ENCODE measurements at regions of chr16 and their contacts with region 1.

Region 1: GRCh38 chr16:68328151-68328859 is 17.5 kb downstream of the PRMT7 start:
- DNase-seq: peak; percentile 83
- H3K4me3 ChIP-seq: no peak overlapping the region
- H3K27ac ChIP-seq: no peak overlapping the region
- H3K4me1 ChIP-seq: peaks cover 34% of the 10 kb centered on the region
- H3K27me3 ChIP-seq: no peaks in the 10 kb centered on the region
- CTCF ChIP-seq: peak; percentile 87 to 97
- POLR2A ChIP-seq: no peak

Region 2: DNA sequence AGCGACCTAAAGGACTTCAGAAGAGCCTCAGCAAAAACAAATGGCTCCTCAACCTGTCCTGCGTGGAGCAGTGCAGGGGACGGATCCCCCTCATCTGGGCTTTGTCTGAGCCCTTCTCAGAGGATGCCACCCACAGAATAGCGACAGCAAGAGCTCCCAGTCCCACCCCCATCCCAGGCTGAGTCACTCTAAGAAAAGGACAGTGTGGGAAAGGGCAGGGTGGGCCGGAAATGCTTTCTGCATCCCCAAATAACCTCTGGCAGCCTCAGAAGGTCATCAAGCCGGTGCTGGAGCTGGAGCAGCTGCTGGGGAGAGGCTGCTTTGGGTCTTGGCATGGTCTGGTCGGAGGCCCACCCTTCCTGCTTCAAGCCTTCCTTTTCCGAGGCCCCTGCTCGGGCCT is 368.8 kb before region 1 on chr16:
- CTCF ChIA-PET with region 1: no interaction called
- POLR2A ChIA-PET with region 1: no interaction called
- dilution Hi-C with region 1: no loop called
- intact Hi-C with region 1: no loop called
- DNase-seq: no peak
- H3K4me3 ChIP-seq: no peak overlapping the region
- H3K27ac ChIP-seq: no peak overlapping the region
- H3K4me1 ChIP-seq: no peaks in the 10 kb centered on the region
- H3K27me3 ChIP-seq: no peaks in the 10 kb centered on the region
- CTCF ChIP-seq: no peak
- POLR2A ChIP-seq: no peak

Region 3: DNA sequence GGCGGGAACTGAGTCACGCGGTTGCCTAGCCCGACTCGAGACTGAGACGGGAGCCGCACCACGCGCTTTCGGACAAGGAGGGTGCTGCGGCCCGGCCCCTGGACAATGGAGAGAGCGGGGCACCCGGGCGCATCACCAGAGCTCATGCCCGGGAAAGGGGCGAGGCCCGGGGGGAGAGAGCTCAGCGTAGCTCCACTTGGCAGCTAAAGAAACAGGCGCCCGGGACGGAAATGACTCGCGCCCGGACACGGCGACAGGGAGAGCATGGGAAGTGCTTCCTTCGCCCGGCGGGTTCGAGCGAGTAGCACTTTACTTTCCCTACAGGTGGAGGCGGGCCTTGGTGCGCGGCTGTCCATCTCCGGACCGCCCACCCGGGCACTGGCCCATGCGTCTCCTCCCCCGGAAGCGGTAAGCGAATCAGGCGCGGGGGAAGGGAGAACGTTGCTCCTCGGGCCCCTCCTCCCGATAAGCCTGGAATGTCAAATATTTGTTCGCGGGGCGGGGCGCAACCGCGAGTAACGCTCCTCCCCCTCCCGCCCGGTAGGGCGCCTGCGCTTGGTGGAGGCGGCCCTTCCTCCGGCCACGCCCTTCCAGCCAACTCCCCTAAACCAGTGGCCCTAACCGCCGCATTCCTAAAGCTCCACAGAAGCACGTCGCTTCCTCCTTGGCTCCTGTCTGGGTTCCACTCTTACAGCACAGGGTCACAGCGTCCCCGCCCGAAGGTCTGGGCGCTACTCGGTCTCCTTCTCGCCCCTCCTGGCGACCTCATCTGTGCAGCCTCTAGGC is 90.9 kb before region 1 on chr16:
- CTCF ChIA-PET with region 1: interaction called, 23 read pairs
- POLR2A ChIA-PET with region 1: interaction called, 4 read pairs
- dilution Hi-C with region 1: no loop called
- intact Hi-C with region 1: loop called (anchors 1 kb)
- DNase-seq: peak; percentile 98
- H3K4me3 ChIP-seq: peak overlapping the region in 2 of 3 experiments; percentile 42 to 43
- H3K27ac ChIP-seq: peak overlapping the region; percentile 93
- H3K4me1 ChIP-seq: peaks cover 13% of the 10 kb centered on the region
- H3K27me3 ChIP-seq: no peaks in the 10 kb centered on the region
- CTCF ChIP-seq: no peak
- POLR2A ChIP-seq: peak; percentile 99

Region 4: DNA sequence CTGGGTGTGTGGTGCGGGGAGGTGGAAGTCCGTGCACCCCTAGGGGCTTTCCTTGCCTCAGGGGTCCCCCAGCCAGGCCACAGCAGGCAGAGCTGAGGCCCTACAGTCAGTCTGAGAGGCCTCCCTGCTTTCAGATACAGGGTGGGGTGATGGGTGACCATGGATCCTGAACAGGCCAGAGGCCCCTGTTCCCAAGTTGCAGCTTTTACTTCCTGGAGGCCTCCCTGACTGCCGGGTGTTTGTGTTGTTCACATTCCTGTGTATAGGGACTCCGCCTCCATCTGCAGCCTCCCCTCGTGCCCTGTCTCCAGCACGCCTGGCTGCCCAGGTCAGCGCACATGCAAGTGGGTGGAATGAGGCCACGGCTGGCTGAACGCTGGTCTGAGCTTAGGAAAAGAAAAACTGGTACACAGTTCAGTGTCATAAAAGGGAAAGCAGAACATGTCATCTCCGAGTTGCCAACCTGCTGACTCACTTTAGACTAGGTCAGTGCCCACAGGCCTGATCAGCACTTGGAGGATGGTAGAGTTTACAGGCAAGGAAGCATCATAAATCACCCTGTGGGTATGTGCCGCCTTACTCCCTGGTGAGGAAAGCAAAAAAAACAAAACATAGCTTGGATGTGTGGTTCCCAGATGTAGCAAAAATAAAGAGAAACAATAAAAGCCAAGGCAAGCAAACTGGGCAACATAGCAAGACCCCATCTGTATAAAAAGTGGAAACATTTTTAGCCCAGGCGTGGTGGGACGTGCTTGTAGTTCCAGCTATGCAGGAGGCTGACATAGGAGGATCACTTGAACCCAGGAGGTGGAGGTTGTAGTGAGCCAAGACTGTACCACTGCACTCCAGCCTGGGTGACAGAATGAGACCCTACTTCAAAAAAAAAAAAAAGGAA is 70.2 kb before region 1 on chr16:
- CTCF ChIA-PET with region 1: interaction called, 212 read pairs
- POLR2A ChIA-PET with region 1: no interaction called
- dilution Hi-C with region 1: no loop called
- intact Hi-C with region 1: loop called (anchors 1 kb)
- DNase-seq: peak; percentile 63
- H3K4me3 ChIP-seq: no peak overlapping the region
- H3K27ac ChIP-seq: peak overlapping the region; percentile 27
- H3K4me1 ChIP-seq: peaks cover 8% of the 10 kb centered on the region
- H3K27me3 ChIP-seq: no peaks in the 10 kb centered on the region
- CTCF ChIP-seq: no peak
- POLR2A ChIP-seq: no peak

Region 5: DNA sequence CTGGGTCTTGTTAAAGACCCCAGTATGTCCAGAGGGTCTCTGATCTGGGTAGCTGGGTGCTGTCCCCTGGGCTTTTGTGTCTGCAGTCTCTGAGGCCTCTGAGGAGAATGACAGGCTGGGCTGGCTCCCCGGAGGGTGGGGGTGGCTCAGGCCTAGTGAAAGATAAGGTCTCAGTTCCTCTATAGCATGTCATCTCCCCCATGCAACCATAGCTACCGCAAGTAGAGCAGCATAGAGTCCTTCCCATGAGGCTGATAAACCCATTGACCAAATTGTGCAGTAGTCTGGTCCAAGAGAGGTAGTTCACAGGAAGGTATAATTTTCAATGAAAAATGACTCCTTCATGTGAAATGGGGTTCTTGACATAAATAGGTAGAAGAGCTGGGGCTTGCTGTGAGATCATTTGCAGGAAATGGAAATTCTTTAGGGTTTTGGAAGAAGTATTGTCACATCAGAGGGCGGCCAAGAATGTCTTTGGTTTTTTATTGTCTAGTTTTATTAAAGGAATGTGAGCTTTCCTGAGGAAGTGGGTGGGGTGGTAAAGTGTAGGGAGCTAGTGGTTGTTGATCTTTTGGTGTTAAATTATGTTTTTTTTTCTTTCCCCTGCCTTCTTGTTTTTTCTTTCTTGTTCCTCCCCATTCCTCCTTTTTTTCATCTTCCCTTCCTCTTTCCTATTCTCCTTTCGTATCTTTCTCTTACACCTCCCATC is 38.5 kb before region 1 on chr16:
- CTCF ChIA-PET with region 1: interaction called, 8 read pairs
- POLR2A ChIA-PET with region 1: no interaction called
- dilution Hi-C with region 1: no loop called
- intact Hi-C with region 1: loop called (anchors 2 kb)
- DNase-seq: peak; percentile 76
- H3K4me3 ChIP-seq: no peak overlapping the region
- H3K27ac ChIP-seq: peak overlapping the region; percentile 88
- H3K4me1 ChIP-seq: peaks cover 65% of the 10 kb centered on the region
- H3K27me3 ChIP-seq: no peaks in the 10 kb centered on the region
- CTCF ChIP-seq: no peak
- POLR2A ChIP-seq: peak; percentile 78

Measured in endothelial cell of umbilical vein (primary cell).